Motor neuron (in vitro differentiated cells): ENCODE measurements at regions of chr12 and their contacts with region 1.

Region 1: GRCh38 chr12:91355150-91356006 is 172.8 kb upstream of the DCN start:
- ATAC-seq: peak; percentile 79 to 100 (median 94)
- H3K4me3 ChIP-seq: no peak overlapping the region
- H3K27ac ChIP-seq: no peak overlapping the region
- H3K4me1 ChIP-seq: peaks cover 7 to 11% of the 10 kb centered on the region in 2 donors

Region 2: GRCh38 chr12:90826036-90826435 is 529.3 kb before region 1 on chr12:
- in situ Hi-C with region 1: no loop called
- ATAC-seq: peak in 2 of 8 experiments; percentile 91
- H3K4me3 ChIP-seq: no peak overlapping the region
- H3K27ac ChIP-seq: no peak overlapping the region
- H3K4me1 ChIP-seq: no peaks in the 10 kb centered on the region

Region 3: GRCh38 chr12:90959538-90960139 is 395.7 kb before region 1 on chr12:
- in situ Hi-C with region 1: loop called in 1 of 9 experiments (anchors 25 kb)
- ATAC-seq: peak in 6 of 8 experiments; percentile 47 to 77 (median 63)
- H3K4me3 ChIP-seq: no peak overlapping the region
- H3K27ac ChIP-seq: no peak overlapping the region
- H3K4me1 ChIP-seq: no peaks in the 10 kb centered on the region

Region 4: GRCh38 chr12:90978117-90978770 is 377.1 kb before region 1 on chr12:
- in situ Hi-C with region 1: loop called in 3 of 9 experiments (anchors 10 to 25 kb)
- ATAC-seq: peak in 6 of 8 experiments; percentile 52 to 93 (median 84)
- H3K4me3 ChIP-seq: no peak overlapping the region
- H3K27ac ChIP-seq: no peak overlapping the region
- H3K4me1 ChIP-seq: no peaks in the 10 kb centered on the region

Region 5: GRCh38 chr12:92649511-92650227 is 1294.3 kb after region 1 on chr12:
- in situ Hi-C with region 1: loop called in 1 of 9 experiments (anchors 25 kb)
- ATAC-seq: peak; percentile 88 to 98 (median 94)
- H3K4me3 ChIP-seq: no peak overlapping the region
- H3K27ac ChIP-seq: no peak overlapping the region
- H3K4me1 ChIP-seq: peaks cover 3% of the 10 kb centered on the region in 2 donors